ENCODE measurements at regions of chr12 and their contacts with region 1.

Region 1: DNA sequence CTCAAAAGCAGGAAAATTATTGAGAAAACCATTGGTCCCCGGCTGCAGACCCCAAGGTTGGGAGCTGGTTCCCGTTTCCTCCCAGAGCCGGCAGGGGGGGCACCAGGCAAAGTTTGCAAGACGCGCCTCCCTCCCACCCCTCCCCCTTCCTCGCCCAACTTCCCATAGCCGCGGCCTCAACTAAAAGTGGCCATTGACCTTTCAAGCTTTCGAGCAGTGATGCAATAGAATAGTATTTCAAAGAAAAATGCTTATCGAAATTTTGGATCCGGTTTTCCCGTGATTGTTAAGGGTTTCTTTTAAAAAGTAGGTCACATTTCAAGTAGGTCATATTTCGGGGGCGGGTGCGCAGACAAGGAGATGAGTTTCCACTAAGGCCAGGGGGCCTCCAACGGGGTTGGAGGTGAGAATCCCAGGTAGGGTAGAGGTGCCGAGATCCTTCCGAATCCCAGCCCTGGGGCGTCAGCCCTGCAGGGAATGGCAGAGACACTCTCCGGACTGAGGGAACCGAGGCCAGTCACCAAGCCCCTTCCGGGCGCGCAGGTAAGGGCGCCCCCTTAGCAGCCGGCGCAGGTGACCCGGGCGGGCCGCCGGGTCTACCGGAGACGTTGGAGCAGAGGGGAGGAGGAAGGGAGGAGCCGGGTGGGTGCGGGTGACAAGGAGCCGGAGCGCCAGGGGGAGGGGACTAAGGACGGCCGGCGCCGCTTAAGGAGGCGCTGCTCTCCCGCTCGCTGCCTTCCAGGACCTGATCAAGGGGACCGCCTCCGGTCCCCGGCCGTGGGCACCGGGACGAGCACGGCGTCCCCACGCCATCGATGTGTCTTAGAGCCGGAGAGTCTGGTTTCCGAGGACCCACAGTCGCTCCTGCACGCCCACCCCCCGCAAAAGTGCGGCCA is 2.6 kb upstream of the SOCS2 start:
- DNase-seq: peak; percentile 85 to 96
- H3K4me3 ChIP-seq: peak overlapping the region; percentile 62 to 84 (median 72)
- H3K27ac ChIP-seq: peak overlapping the region; percentile 89 to 98 (median 97)
- H3K4me1 ChIP-seq: peaks cover 5 to 33% (median 30%) of the 10 kb centered on the region in 4 donors
- H3K27me3 ChIP-seq: peaks cover 0 to 24% (median 0%) of the 10 kb centered on the region in 3 donors
- CTCF ChIP-seq: peak in 4 of 7 experiments; percentile 58 to 87 (median 63)
- EP300 ChIP-seq: no peak
- POLR2A ChIP-seq: no peak

Region 2: DNA sequence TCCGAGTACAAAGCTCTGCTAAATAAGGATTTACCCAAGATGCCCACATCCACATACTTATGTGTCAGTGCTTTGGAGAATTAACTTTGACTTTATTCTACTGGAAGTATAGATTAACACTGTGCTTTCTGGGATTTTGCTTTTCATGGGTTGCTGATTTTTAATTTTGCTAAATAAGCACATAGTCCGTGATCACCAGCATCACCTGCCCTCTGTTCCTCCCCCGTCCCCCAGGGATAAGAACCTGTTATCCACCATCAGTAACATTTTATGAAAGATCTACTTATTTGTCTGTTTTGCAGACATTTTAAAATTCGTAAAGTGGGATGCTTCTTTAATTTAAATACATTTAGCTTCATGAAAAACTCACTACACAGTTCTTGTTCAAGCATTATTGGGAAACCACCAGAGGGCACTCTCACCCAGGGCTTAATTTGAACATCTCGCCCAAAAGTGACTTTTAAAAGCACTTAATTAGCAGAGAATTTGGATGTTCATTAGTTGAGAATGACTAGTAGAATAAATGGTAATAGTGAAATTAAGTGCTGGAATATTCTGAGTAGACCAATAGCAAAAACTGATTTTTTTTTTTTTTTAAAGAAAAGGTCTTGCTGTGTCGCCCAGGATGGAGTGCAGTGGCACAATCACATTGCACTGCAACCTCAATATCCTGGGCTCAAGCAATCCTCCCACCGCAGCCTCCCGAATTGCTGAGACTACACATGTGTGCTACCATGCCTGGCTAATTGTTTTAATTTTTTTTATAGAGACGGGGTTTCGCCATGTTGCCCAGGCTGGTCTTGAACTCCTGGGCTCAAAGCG is 66.9 kb before region 1 on chr12:
- intact Hi-C with region 1: loop called (anchors 5 kb)
- DNase-seq: peak; percentile 48 to 75
- H3K4me3 ChIP-seq: no peak overlapping the region
- H3K27ac ChIP-seq: no peak overlapping the region
- H3K4me1 ChIP-seq: no peaks in the 10 kb centered on the region
- H3K27me3 ChIP-seq: no peaks in the 10 kb centered on the region
- CTCF ChIP-seq: peak in 5 of 7 experiments; percentile 49 to 80 (median 74)
- EP300 ChIP-seq: no peak
- POLR2A ChIP-seq: no peak

Region 3: GRCh38 chr12:93526786-93527428 is 43.0 kb before region 1 on chr12:
- intact Hi-C with region 1: no loop called
- DNase-seq: peak in 1 of 2 donors; percentile 73
- H3K4me3 ChIP-seq: no peak overlapping the region
- H3K27ac ChIP-seq: peak overlapping the region in 2 of 5 donors; percentile 17 to 25
- H3K4me1 ChIP-seq: peaks cover 0 to 31% (median 11%) of the 10 kb centered on the region in 4 donors
- H3K27me3 ChIP-seq: no peaks in the 10 kb centered on the region
- CTCF ChIP-seq: no peak
- EP300 ChIP-seq: no peak
- POLR2A ChIP-seq: no peak

Region 4: GRCh38 chr12:93742110-93742934 is 172.4 kb after region 1 on chr12:
- intact Hi-C with region 1: loop called (anchors 5 kb)
- DNase-seq: peak; percentile 77 to 89
- H3K4me3 ChIP-seq: peak overlapping the region; percentile 46 to 58 (median 50)
- H3K27ac ChIP-seq: peak overlapping the region; percentile 89 to 95 (median 91)
- H3K4me1 ChIP-seq: peaks cover 4 to 76% (median 47%) of the 10 kb centered on the region in 4 donors
- H3K27me3 ChIP-seq: no peaks in the 10 kb centered on the region
- CTCF ChIP-seq: peak in 2 of 7 experiments; percentile 5 to 49
- EP300 ChIP-seq: peak; percentile 63
- POLR2A ChIP-seq: no peak

Region 5: GRCh38 chr12:93778306-93778705 is 208.4 kb after region 1 on chr12:
- intact Hi-C with region 1: no loop called
- DNase-seq: peak in 1 of 2 donors; percentile 80
- H3K4me3 ChIP-seq: no peak overlapping the region
- H3K27ac ChIP-seq: peak overlapping the region in 4 of 5 donors; percentile 71 to 83 (median 81)
- H3K4me1 ChIP-seq: peaks cover 0 to 46% (median 33%) of the 10 kb centered on the region in 4 donors
- H3K27me3 ChIP-seq: no peaks in the 10 kb centered on the region
- CTCF ChIP-seq: no peak
- EP300 ChIP-seq: no peak
- POLR2A ChIP-seq: no peak

Region 6: GRCh38 chr12:94101738-94102660 is 532.1 kb after region 1 on chr12:
- intact Hi-C with region 1: loop called (anchors 5 kb)
- DNase-seq: peak; percentile 88 to 95
- H3K4me3 ChIP-seq: peak overlapping the region; percentile 54 to 82 (median 72)
- H3K27ac ChIP-seq: peak overlapping the region in 4 of 5 donors; percentile 42 to 75 (median 54)
- H3K4me1 ChIP-seq: peaks cover 5 to 26% (median 19%) of the 10 kb centered on the region in 4 donors
- H3K27me3 ChIP-seq: peaks cover 0 to 34% (median 7%) of the 10 kb centered on the region in 3 donors
- CTCF ChIP-seq: peak in 5 of 7 experiments; percentile 52 to 80 (median 66)
- EP300 ChIP-seq: no peak
- POLR2A ChIP-seq: no peak